ENCODE measurements at regions of chr1 and their contacts with region 1.

Region 1: GRCh38 chr1:153649863-153650235 is 8.7 kb upstream of the SNAPIN start:
- DNase-seq: no peak
- ATAC-seq: peak; percentile 42 to 45
- H3K4me3 Mint-ChIP-seq: peak overlapping the region; percentile 61 to 91 (median 83)
- H3K27ac Mint-ChIP-seq: peak overlapping the region; percentile 71 to 97 (median 94)
- H3K4me1 Mint-ChIP-seq: peaks cover 32 to 58% (median 55%) of the 10 kb centered on the region in 4 donors
- H3K27me3 Mint-ChIP-seq: no peaks in the 10 kb centered on the region

Region 2: DNA sequence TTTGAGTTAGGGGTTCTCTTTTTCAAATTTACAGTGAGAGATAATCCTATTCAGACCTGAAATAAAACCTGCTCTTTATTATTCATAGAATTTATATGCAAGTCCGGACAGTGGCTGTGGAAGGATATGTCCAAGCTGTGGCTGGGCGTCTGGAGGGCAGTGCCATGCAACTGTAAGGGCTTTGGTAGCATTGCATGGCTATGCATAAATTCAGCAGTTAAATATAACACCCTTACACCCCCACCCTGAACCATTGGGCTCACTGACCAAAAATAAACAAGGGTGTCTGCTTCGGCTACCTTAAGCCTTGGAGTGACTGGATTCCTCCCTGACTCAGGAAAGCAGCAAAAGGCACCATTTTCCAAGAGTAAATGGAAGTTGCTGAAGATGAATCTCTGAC is 10.6 kb before region 1 on chr1:
- POLR2A ChIA-PET with region 1: interaction called, 85 read pairs
- DNase-seq: no peak
- ATAC-seq: no peak
- H3K4me3 Mint-ChIP-seq: no peak overlapping the region
- H3K27ac Mint-ChIP-seq: peak overlapping the region in 1 of 10 donors; percentile 29
- H3K4me1 Mint-ChIP-seq: peaks cover 20 to 72% (median 62%) of the 10 kb centered on the region in 4 donors
- H3K27me3 Mint-ChIP-seq: no peaks in the 10 kb centered on the region

Region 3: DNA sequence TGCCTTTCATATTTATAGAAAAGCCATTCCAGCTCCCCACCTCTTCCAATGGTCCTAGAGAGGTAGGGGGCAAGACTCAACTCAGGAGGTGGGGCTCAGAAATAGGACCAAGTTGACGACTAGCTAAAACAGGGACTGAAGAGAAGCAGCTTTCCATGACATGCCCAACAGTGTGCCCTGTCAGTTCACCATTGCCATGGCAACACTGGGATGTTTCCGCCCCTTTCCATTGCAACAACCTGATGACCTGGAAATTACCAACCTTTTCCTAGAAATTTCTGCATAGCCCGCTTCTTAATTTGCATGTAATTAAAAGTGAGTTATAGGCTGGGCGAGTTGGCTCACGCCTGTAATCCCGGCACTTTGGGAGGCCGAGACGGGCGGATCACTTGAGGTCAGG is 55.6 kb after region 1 on chr1:
- POLR2A ChIA-PET with region 1: no interaction called
- DNase-seq: no peak
- ATAC-seq: no peak
- H3K4me3 Mint-ChIP-seq: no peak overlapping the region
- H3K27ac Mint-ChIP-seq: no peak overlapping the region
- H3K4me1 Mint-ChIP-seq: no peaks in the 10 kb centered on the region
- H3K27me3 Mint-ChIP-seq: no peaks in the 10 kb centered on the region

Measured in naive thymus-derived CD8-positive, alpha-beta T cell (primary cell).